ENCODE measurements at regions of chr7 and their contacts with region 1.

Region 1: GRCh38 chr7:116809636-116810266 is 52.6 kb upstream of the CAPZA2 start:
- DNase-seq: no peak
- ATAC-seq: peak; percentile 61
- H3K4me3 ChIP-seq: no peak overlapping the region
- H3K27ac ChIP-seq: peak overlapping the region; percentile 69 to 81 (median 75)
- H3K4me1 ChIP-seq: peaks cover 12 to 22% of the 10 kb centered on the region in 2 donors
- H3K27me3 ChIP-seq: no peaks in the 10 kb centered on the region
- CTCF ChIP-seq: peak; percentile 65 to 78 (median 72)
- POLR2A ChIP-seq: no peak

Region 2: DNA sequence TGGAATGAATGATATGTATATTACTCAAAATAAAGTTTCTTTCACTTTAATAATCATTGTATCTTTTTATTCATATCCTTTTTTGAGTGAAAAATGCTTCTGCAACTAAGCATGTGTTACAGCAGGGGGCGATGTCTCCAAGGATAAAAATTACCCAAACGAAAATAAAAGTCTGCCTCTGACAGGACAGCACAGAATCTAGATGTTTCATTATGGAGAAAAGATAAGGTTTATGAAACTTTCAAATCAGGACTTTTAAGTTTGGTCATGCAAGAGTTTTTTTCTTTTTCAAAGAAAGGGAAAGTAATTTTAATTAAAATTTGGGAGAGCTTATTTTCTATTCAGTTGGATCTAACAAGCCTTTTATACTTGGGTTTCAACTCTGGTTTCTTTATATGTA is 551.0 kb before region 1 on chr7:
- in situ Hi-C with region 1: loop called in 3 of 4 experiments (anchors 5 to 10 kb)
- intact Hi-C with region 1: loop called (anchors 2 kb)
- DNase-seq: peak in 1 of 2 donors; percentile 8
- ATAC-seq: peak; percentile 61 to 75
- H3K4me3 ChIP-seq: peak overlapping the region in 1 of 4 donors; percentile 24
- H3K27ac ChIP-seq: peak overlapping the region in 1 of 4 donors; percentile 45
- H3K4me1 ChIP-seq: peaks cover 0 to 8% of the 10 kb centered on the region in 2 donors
- H3K27me3 ChIP-seq: no peaks in the 10 kb centered on the region
- CTCF ChIP-seq: peak; percentile 83 to 95 (median 85)
- POLR2A ChIP-seq: peak in 1 of 2 donors; percentile 1

Region 3: GRCh38 chr7:116271963-116272839 is 537.5 kb before region 1 on chr7:
- in situ Hi-C with region 1: loop called in 2 of 4 experiments (anchors 5 to 10 kb)
- intact Hi-C with region 1: loop called (anchors 5 kb)
- DNase-seq: peak; percentile 76 to 83
- ATAC-seq: peak; percentile 100
- H3K4me3 ChIP-seq: peak overlapping the region in 3 of 4 donors; percentile 19 to 41 (median 33)
- H3K27ac ChIP-seq: peak overlapping the region; percentile 79 to 90 (median 86)
- H3K4me1 ChIP-seq: peaks cover 27 to 48% of the 10 kb centered on the region in 2 donors
- H3K27me3 ChIP-seq: no peaks in the 10 kb centered on the region
- CTCF ChIP-seq: no peak
- POLR2A ChIP-seq: no peak

Region 4: DNA sequence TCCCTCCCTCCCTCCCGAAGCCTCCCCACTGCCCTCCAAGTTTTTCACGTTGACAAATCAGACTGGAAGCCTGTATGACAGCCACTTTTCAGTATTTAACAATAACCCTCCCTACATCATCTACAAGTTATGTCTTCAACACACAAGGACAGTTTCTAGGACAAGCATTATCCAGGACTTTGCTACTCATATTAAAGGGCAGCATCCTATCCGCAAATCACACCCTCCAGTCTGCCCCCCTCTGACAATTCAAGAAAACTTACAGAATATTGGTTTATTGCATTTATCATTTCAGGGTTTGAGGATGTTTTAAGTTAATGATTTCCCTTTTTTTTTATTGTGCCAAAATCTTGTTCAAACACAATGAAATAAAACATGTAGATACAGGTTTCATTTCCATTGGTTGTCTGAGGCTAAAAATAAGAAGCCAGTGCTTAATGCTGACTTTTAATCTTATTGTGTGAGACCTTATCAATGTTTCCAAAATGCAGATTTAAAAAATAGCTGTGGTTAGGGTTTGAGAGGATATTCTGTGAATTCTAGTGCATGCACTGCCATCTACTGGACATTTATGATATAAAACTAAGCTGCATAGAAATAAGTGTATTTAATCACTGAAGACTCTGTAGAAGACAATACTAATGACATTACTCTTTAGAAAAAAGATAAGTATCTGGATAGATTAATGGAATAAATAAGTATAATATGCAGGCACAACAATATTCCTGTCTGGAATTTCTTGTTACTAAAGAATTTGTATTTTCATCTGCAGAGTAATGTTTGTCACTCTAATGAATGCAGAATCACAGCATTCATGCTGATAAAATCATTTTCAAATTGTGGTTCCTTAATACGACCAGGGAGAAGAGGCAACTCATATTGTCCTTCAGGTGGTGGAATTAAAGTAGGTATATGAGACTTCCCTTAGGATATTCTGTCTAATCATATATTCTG is 220.8 kb before region 1 on chr7:
- in situ Hi-C with region 1: loop called (anchors 5 kb)
- intact Hi-C with region 1: loop called (anchors 1 kb)
- DNase-seq: no peak
- ATAC-seq: peak in 1 of 2 donors; percentile 31
- H3K4me3 ChIP-seq: no peak overlapping the region
- H3K27ac ChIP-seq: peak overlapping the region in 2 of 4 donors; percentile 36 to 37
- H3K4me1 ChIP-seq: peaks cover 10 to 12% of the 10 kb centered on the region in 2 donors
- H3K27me3 ChIP-seq: no peaks in the 10 kb centered on the region
- CTCF ChIP-seq: peak; percentile 66 to 84 (median 71)
- POLR2A ChIP-seq: no peak

Region 5: DNA sequence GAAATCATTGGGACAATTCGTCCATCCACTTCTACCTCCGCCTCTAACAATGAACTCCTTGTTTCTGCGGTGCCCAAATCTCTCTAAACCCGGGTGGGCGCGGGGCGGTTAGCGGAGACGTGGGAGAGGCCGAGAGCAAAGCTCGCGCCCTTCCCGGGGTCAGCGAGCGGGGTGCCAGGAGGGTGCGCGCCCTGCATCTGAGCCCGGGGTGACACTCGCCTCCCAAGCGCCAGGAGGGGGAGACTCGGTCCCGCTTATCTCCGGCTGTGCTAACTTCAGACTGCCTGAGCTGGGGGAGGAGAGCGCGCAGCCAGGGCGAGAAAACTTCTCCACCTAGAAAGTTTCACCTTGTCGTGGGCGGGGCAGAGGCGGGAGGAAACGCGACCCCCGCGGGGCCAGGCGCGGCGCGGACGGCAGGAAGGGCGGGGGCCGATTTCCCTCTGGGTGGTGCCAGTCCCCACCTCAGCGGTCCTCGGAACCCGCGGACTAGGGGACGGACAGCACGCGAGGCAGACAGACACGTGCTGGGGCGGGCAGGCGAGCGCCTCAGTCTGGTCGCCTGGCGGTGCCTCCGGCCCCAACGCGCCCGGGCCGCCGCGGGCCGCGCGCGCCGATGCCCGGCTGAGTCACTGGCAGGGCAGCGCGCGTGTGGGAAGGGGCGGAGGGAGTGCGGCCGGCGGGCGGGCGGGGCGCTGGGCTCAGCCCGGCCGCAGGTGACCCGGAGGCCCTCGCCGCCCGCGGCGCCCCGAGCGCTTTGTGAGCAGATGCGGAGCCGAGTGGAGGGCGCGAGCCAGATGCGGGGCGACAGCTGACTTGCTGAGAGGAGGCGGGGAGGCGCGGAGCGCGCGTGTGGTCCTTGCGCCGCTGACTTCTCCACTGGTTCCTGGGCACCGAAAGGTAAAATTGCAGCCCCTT is 137.8 kb before region 1 on chr7 and contains the start of gene MET:
- in situ Hi-C with region 1: loop called in 3 of 4 experiments (anchors 5 kb)
- intact Hi-C with region 1: loop called (anchors 1 kb)
- DNase-seq: peak; percentile 81 to 89
- ATAC-seq: peak; percentile 76 to 82
- H3K4me3 ChIP-seq: peak within 1 kb of the TSS; percentile 77 to 83 (median 78)
- H3K27ac ChIP-seq: peak within 1 kb of the TSS; percentile 95 to 96 (median 96)
- H3K4me1 ChIP-seq: peaks cover 46 to 51% of the 10 kb centered on the region in 2 donors
- H3K27me3 ChIP-seq: no peaks in the 10 kb centered on the region
- CTCF ChIP-seq: peak; percentile 70 to 82 (median 75)
- POLR2A ChIP-seq: peak; percentile 88 to 92
- total RNA-seq, gene MET: 15.9 to 36.8 (median 28.7) TPM

Region 6: DNA sequence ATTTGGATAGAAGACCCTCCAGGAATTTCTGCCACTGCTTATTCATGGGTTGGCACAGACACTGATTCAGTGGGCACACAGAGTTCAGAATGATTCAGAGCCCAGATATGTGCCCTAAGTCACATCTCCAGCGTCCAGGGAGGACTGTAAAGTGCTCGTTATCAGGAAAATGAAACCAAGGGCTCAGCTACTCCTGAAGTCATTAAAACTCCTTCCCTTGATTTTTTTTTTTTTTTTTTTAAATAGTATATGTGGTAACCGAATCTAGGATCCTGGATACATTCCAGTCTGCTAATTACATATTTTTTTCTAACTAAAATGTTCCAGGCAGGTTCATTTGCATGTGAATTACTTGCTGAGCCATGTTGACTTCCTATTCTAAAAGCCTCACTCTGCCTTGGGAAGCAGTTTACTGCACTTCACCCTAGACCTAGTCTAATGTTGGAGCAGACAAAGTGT is 103.1 kb before region 1 on chr7:
- in situ Hi-C with region 1: no loop called
- intact Hi-C with region 1: no loop called
- DNase-seq: peak; percentile 24 to 52
- ATAC-seq: peak; percentile 86 to 97
- H3K4me3 ChIP-seq: peak overlapping the region; percentile 21 to 40 (median 34)
- H3K27ac ChIP-seq: peak overlapping the region; percentile 55 to 78 (median 71)
- H3K4me1 ChIP-seq: peaks cover 60 to 81% of the 10 kb centered on the region in 2 donors
- H3K27me3 ChIP-seq: no peaks in the 10 kb centered on the region
- CTCF ChIP-seq: no peak
- POLR2A ChIP-seq: no peak

Region 7: GRCh38 chr7:116752305-116753074 is 57.3 kb before region 1 on chr7:
- in situ Hi-C with region 1: no loop called
- intact Hi-C with region 1: no loop called
- DNase-seq: no peak
- ATAC-seq: peak in 1 of 2 donors; percentile 45
- H3K4me3 ChIP-seq: no peak overlapping the region
- H3K27ac ChIP-seq: peak overlapping the region in 2 of 4 donors; percentile 42 to 47
- H3K4me1 ChIP-seq: no peaks in the 10 kb centered on the region
- H3K27me3 ChIP-seq: no peaks in the 10 kb centered on the region
- CTCF ChIP-seq: no peak
- POLR2A ChIP-seq: no peak

Region 8: DNA sequence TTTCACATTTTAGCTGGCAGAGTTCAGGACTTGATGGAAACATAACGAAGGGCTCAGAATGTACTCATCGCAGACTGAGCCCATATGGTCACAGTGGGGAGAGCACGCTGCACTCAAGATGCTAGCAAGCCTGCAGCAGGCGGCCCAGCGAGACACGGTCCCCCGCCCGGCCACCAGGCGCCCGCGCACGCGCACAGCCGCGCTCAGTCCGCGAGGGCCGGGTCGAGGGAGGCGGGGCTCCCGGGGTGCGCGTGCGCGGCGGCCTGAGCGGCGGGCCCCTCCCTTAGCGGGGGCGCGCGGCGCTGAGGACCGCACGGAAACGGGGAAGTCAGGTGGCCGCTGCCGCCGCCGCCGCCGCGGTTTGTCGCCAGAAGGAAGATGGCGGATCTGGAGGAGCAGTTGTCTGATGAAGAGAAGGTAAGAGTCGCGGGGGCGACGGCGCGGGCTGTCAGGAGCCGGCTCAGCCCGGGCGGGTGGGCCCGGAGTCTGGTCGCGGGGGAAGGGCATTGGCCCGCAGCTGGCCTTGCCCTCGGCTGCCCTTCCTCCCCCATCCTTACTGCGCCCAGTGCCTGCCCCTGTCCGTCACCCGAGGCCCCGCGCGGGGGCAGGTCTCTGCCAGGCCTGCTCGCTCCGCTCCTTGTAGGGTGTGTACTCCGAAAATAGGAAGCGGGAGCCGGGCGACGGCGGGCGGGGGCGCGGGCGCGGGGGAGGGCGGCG is 52.6 kb after region 1 on chr7 and contains the start of gene CAPZA2:
- in situ Hi-C with region 1: no loop called
- intact Hi-C with region 1: loop called (anchors 2 kb)
- DNase-seq: peak; percentile 82 to 90
- ATAC-seq: peak; percentile 93
- H3K4me3 ChIP-seq: peak within 1 kb of the TSS; percentile 67 to 94 (median 82)
- H3K27ac ChIP-seq: peak within 1 kb of the TSS; percentile 92 to 99 (median 96)
- H3K4me1 ChIP-seq: peaks cover 29 to 38% of the 10 kb centered on the region in 2 donors
- H3K27me3 ChIP-seq: no peaks in the 10 kb centered on the region
- CTCF ChIP-seq: peak; percentile 52 to 94 (median 82)
- POLR2A ChIP-seq: peak; percentile 83 to 90
- total RNA-seq, gene CAPZA2: 110 to 158 (median 137) TPM

Region 9: GRCh38 chr7:117202511-117202910 is 392.8 kb after region 1 on chr7:
- in situ Hi-C with region 1: no loop called
- intact Hi-C with region 1: no loop called
- DNase-seq: no peak
- ATAC-seq: no peak
- H3K4me3 ChIP-seq: no peak overlapping the region
- H3K27ac ChIP-seq: no peak overlapping the region
- H3K4me1 ChIP-seq: no peaks in the 10 kb centered on the region
- H3K27me3 ChIP-seq: no peaks in the 10 kb centered on the region
- CTCF ChIP-seq: no peak
- POLR2A ChIP-seq: no peak